ENCODE measurements at regions of chr1 and their contacts with region 1.

Region 1: GRCh38 chr1:12124693-12125421 is 41.9 kb upstream of the TNFRSF1B start:
- DNase-seq: peak; percentile 62 to 88 (median 76)
- ATAC-seq: peak; percentile 86
- H3K4me3 ChIP-seq: no peak overlapping the region
- H3K4me3 Mint-ChIP-seq: peak overlapping the region in 8 of 10 donors; percentile 24 to 65 (median 39)
- H3K27ac ChIP-seq: no peak overlapping the region
- H3K27ac Mint-ChIP-seq: peak overlapping the region in 8 of 9 donors; percentile 2 to 92 (median 46)
- H3K4me1 ChIP-seq: peaks cover 16 to 17% of the 10 kb centered on the region in 2 donors
- H3K4me1 Mint-ChIP-seq: peaks cover 39 to 46% (median 42%) of the 10 kb centered on the region in 7 donors
- H3K27me3 ChIP-seq: no peaks in the 10 kb centered on the region
- H3K27me3 Mint-ChIP-seq: no peaks in the 10 kb centered on the region

Region 2: GRCh38 chr1:12153181-12153785 is 28.4 kb after region 1 on chr1:
- CTCF ChIA-PET with region 1: interaction called, 45 read pairs
- POLR2A ChIA-PET with region 1: interaction called, 10 read pairs
- intact Hi-C with region 1: no loop called
- DNase-seq: no peak
- ATAC-seq: peak; percentile 79
- H3K4me3 ChIP-seq: no peak overlapping the region
- H3K4me3 Mint-ChIP-seq: peak overlapping the region in 9 of 10 donors; percentile 20 to 73 (median 34)
- H3K27ac ChIP-seq: peak overlapping the region; percentile 74
- H3K27ac Mint-ChIP-seq: peak overlapping the region; percentile 24 to 96 (median 79)
- H3K4me1 ChIP-seq: peaks cover 68 to 72% of the 10 kb centered on the region in 2 donors
- H3K4me1 Mint-ChIP-seq: peaks cover 70 to 89% (median 84%) of the 10 kb centered on the region in 7 donors
- H3K27me3 ChIP-seq: no peaks in the 10 kb centered on the region
- H3K27me3 Mint-ChIP-seq: no peaks in the 10 kb centered on the region

Region 3: GRCh38 chr1:12184008-12184681 is 59.3 kb after region 1 on chr1:
- CTCF ChIA-PET with region 1: interaction called, 36 read pairs
- POLR2A ChIA-PET with region 1: no interaction called
- intact Hi-C with region 1: no loop called
- DNase-seq: no peak
- ATAC-seq: peak; percentile 78
- H3K4me3 ChIP-seq: no peak overlapping the region
- H3K4me3 Mint-ChIP-seq: no peak overlapping the region
- H3K27ac ChIP-seq: no peak overlapping the region
- H3K27ac Mint-ChIP-seq: peak overlapping the region in 6 of 9 donors; percentile 27 to 74 (median 56)
- H3K4me1 ChIP-seq: peaks cover 14 to 44% of the 10 kb centered on the region in 2 donors
- H3K4me1 Mint-ChIP-seq: peaks cover 40 to 85% (median 56%) of the 10 kb centered on the region in 7 donors
- H3K27me3 ChIP-seq: no peaks in the 10 kb centered on the region
- H3K27me3 Mint-ChIP-seq: no peaks in the 10 kb centered on the region

Region 4: DNA sequence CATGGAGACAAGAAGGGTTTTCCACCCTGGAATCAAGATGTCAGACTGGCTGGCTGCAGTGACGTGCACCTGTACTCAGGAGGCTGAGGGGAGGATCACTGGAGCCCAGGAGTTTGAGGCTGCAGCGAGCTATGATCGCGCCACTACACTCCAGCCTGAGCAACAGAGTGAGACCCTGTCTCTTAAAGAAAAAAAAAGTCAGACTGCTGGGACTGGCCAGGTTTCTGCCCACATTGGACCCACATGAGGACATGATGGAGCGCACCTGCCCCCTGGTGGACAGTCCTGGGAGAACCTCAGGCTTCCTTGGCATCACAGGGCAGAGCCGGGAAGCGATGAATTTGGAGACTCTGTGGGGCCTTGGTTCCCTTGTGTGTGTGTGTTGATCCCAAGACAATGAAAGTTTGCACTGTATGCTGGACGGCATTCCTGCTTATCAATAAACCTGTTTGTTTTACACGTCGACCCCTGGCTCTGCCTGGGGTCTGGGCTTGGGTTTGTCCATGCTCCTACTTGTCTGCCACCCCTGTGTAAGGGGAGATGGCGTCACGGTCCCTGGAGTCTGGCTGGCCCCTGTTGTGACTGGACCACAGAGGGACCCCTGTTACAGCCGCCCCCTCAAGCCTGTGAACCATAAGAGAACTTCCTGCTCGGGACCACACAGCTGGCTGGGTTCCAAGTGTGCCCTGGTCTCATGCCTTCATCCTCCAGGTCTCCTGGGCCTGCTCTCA is 84.1 kb after region 1 on chr1:
- CTCF ChIA-PET with region 1: interaction called, 250 read pairs
- POLR2A ChIA-PET with region 1: interaction called, 64 read pairs
- intact Hi-C with region 1: loop called (anchors 1 kb)
- DNase-seq: peak; percentile 64 to 92 (median 79)
- ATAC-seq: peak; percentile 89
- H3K4me3 ChIP-seq: no peak overlapping the region
- H3K4me3 Mint-ChIP-seq: peak overlapping the region in 6 of 10 donors; percentile 23 to 47 (median 34)
- H3K27ac ChIP-seq: peak overlapping the region; percentile 25
- H3K27ac Mint-ChIP-seq: peak overlapping the region; percentile 18 to 90 (median 76)
- H3K4me1 ChIP-seq: peaks cover 32 to 39% of the 10 kb centered on the region in 2 donors
- H3K4me1 Mint-ChIP-seq: peaks cover 32 to 56% (median 51%) of the 10 kb centered on the region in 7 donors
- H3K27me3 ChIP-seq: no peaks in the 10 kb centered on the region
- H3K27me3 Mint-ChIP-seq: no peaks in the 10 kb centered on the region

Region 5: GRCh38 chr1:12244078-12244477 is 119.2 kb after region 1 on chr1:
- CTCF ChIA-PET with region 1: interaction called, 14 read pairs
- POLR2A ChIA-PET with region 1: no interaction called
- intact Hi-C with region 1: no loop called
- DNase-seq: no peak
- ATAC-seq: no peak
- H3K4me3 ChIP-seq: no peak overlapping the region
- H3K4me3 Mint-ChIP-seq: no peak overlapping the region
- H3K27ac ChIP-seq: no peak overlapping the region
- H3K27ac Mint-ChIP-seq: no peak overlapping the region
- H3K4me1 ChIP-seq: no peaks in the 10 kb centered on the region
- H3K4me1 Mint-ChIP-seq: peaks cover 0 to 14% (median 6%) of the 10 kb centered on the region in 7 donors
- H3K27me3 ChIP-seq: no peaks in the 10 kb centered on the region
- H3K27me3 Mint-ChIP-seq: no peaks in the 10 kb centered on the region

Region 6: DNA sequence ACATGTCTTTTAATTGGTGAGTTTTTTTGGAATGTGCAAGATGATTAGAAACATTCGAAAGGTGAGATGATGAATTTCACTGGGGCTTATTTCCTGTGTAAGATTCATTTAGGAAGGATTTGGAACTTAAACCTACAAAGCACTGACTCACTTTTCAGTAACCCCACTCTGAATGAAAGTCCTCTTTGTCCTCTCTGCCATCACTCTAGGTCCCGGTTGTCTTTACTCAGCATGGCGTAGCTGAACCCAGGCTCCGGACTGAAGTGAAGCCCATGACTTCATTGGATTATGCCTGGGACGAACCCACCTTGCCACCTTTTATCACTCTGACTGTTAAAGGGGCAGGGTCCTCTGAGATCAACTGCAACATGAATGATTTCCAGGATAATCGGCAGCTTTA is 244.4 kb after region 1 on chr1:
- CTCF ChIA-PET with region 1: no interaction called
- POLR2A ChIA-PET with region 1: no interaction called
- intact Hi-C with region 1: no loop called
- DNase-seq: no peak
- ATAC-seq: no peak
- H3K4me3 ChIP-seq: no peak overlapping the region
- H3K4me3 Mint-ChIP-seq: no peak overlapping the region
- H3K27ac ChIP-seq: no peak overlapping the region
- H3K27ac Mint-ChIP-seq: no peak overlapping the region
- H3K4me1 ChIP-seq: no peaks in the 10 kb centered on the region
- H3K4me1 Mint-ChIP-seq: peaks cover 0 to 4% (median 0%) of the 10 kb centered on the region in 7 donors
- H3K27me3 ChIP-seq: no peaks in the 10 kb centered on the region
- H3K27me3 Mint-ChIP-seq: no peaks in the 10 kb centered on the region

Measured in naive thymus-derived CD4-positive, alpha-beta T cell (primary cell).